Endothelial cell of umbilical vein (primary cell): ENCODE measurements at regions of chr15 and their contacts with region 1.

Region 1: GRCh38 chr15:58457381-58457965 is 25.7 kb downstream of the LIPC start:
- DNase-seq: no peak
- H3K4me3 ChIP-seq: no peak overlapping the region
- H3K27ac ChIP-seq: peak overlapping the region; percentile 46
- H3K4me1 ChIP-seq: peaks cover 28% of the 10 kb centered on the region
- H3K27me3 ChIP-seq: no peaks in the 10 kb centered on the region
- CTCF ChIP-seq: no peak
- POLR2A ChIP-seq: no peak

Region 2: DNA sequence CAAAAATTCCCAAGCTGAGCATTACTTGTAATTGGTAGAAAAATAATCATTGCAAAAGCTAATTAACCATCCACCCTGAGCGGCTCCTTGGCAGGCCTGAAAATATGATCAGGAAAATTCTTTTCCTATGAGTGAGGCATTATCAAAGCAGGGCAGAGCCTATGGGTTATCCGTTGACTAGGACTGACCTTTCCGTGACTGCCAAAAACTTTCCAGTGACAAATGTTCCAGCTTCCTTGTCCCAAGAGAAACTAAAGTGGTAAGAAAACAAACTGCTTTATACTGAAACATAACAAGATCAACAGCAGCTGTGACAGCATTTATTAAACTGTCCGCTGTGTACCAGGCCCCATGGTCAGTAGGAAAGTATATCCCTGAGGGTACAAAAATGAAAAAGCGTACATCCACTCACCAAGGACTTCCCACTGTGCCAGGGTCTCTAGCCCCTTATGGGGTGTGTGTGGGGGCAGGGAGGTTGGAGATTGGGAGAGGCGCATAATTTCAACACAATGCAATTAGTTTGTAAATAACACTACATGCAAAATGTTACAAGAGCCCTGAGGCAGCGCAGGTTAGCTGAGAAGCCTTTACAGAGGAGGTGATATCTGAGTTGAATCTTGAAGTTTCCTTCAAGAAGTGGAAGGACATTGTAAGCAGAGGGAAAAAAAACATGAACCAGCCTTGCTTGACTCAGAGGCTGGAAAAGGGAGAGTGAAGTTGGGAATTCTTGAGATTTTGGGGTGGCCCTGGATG is 17.1 kb before region 1 on chr15:
- CTCF ChIA-PET with region 1: interaction called, 3 read pairs
- POLR2A ChIA-PET with region 1: no interaction called
- dilution Hi-C with region 1: no loop called
- intact Hi-C with region 1: loop called (anchors 2 kb)
- DNase-seq: peak; percentile 90
- H3K4me3 ChIP-seq: no peak overlapping the region
- H3K27ac ChIP-seq: peak overlapping the region; percentile 82
- H3K4me1 ChIP-seq: peaks cover 32% of the 10 kb centered on the region
- H3K27me3 ChIP-seq: no peaks in the 10 kb centered on the region
- CTCF ChIP-seq: no peak
- POLR2A ChIP-seq: peak; percentile 34

Region 3: GRCh38 chr15:58521293-58521991 is 64.0 kb after region 1 on chr15:
- CTCF ChIA-PET with region 1: no interaction called
- POLR2A ChIA-PET with region 1: no interaction called
- dilution Hi-C with region 1: no loop called
- intact Hi-C with region 1: loop called (anchors 5 kb)
- DNase-seq: peak; percentile 88
- H3K4me3 ChIP-seq: no peak overlapping the region
- H3K27ac ChIP-seq: peak overlapping the region; percentile 72
- H3K4me1 ChIP-seq: peaks cover 27% of the 10 kb centered on the region
- H3K27me3 ChIP-seq: no peaks in the 10 kb centered on the region
- CTCF ChIP-seq: no peak
- POLR2A ChIP-seq: no peak

Region 4: GRCh38 chr15:58543664-58544335 is 86.3 kb after region 1 on chr15:
- CTCF ChIA-PET with region 1: no interaction called
- POLR2A ChIA-PET with region 1: no interaction called
- dilution Hi-C with region 1: no loop called
- intact Hi-C with region 1: no loop called
- DNase-seq: no peak
- H3K4me3 ChIP-seq: no peak overlapping the region
- H3K27ac ChIP-seq: no peak overlapping the region
- H3K4me1 ChIP-seq: peaks cover 18% of the 10 kb centered on the region
- H3K27me3 ChIP-seq: no peaks in the 10 kb centered on the region
- CTCF ChIP-seq: no peak
- POLR2A ChIP-seq: no peak

Region 5: DNA sequence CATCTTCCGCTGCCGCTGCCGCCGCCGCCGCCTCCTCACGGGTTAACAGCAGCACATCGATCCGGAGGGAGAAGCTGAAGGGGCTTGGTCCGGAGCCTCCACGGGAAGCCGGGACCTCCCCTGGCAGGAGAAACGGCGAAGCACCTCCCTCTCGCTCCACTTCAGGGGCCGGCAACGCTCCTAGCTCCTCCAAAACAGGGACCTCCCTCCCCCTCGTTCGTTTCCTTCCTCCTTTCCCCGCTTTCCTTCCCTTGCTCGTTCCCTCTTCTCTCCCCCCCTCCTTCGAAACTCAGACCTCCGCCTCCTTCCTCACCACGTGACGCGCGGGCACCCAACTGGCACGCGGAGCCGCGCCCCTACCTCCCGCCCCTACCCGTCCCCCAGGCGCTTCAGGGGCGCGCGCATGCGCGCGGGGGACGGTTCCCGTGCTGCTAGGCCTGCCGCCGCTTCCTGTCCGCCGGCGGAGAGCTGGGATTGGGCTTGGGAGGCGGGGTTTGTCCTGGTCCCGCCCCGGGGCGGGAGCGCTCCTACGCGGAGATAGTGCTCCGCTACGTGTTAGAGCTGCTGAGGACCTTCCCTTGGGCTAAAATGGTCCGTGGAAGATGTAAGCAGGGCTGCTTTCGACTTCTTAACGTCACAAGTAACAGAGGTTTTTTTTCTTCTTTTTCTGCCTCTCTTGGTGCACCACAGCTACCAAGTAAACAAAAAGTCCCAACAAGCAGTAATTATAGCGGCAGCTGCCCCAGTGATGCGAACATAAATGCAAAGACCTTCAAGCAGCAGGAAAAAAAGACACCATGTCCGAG is 292.3 kb after region 1 on chr15 and contains the start of gene ADAM10:
- CTCF ChIA-PET with region 1: no interaction called
- POLR2A ChIA-PET with region 1: no interaction called
- dilution Hi-C with region 1: no loop called
- intact Hi-C with region 1: no loop called
- DNase-seq: peak; percentile 99
- H3K4me3 ChIP-seq: peak within 1 kb of the TSS; percentile 77 to 93 (median 92)
- H3K27ac ChIP-seq: peak within 1 kb of the TSS; percentile 90
- H3K4me1 ChIP-seq: peaks cover 24% of the 10 kb centered on the region
- H3K27me3 ChIP-seq: no peaks in the 10 kb centered on the region
- CTCF ChIP-seq: no peak
- POLR2A ChIP-seq: peak; percentile 71
- total RNA-seq, gene ADAM10: 185 and 203 TPM in 2 replicates